ENCODE measurements at regions of chr11 and their contacts with region 1.

Region 1: DNA sequence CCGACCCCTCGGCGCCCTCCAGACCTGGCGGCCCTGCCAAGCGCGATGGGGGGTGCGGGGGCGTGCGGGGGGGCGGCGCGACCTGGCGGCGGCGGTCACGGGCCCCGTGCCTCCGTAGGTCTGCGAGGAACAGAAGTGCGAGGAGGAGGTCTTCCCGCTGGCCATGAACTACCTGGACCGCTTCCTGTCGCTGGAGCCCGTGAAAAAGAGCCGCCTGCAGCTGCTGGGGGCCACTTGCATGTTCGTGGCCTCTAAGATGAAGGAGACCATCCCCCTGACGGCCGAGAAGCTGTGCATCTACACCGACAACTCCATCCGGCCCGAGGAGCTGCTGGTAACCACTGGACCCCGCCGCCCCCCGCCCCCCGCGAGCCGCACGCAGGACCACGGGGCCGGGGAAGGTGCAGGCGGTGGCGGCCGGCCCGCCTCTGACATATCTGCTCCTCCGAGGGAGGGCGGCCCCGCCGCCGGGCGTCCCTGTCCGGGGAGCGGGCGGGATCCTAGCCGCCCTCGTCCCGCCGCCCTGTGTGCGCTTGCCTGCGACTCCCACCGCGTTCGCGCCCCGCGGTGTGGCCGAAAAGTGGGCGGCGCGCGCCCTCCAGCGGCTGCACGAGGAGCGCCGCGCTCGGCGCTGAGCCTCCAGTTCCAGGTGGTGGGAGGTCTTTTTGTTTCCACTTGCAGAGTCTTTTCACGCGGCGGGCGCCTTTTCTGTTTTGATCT is 2.1 kb downstream of the CCND1 start:
- DNase-seq: peak; percentile 72 to 89
- H3K4me3 ChIP-seq: peak overlapping the region; percentile 72 to 91
- H3K27ac ChIP-seq: peak overlapping the region; percentile 96
- H3K4me1 ChIP-seq: peaks cover 7 to 60% (median 43%) of the 10 kb centered on the region in 4 donors
- H3K27me3 ChIP-seq: no peaks in the 10 kb centered on the region
- CTCF ChIP-seq: peak; percentile 96 to 97

Region 2: GRCh38 chr11:68806921-68807844 is 835.9 kb before region 1 on chr11:
- intact Hi-C with region 1: loop called (anchors 10 kb)
- DNase-seq: no peak
- H3K4me3 ChIP-seq: no peak overlapping the region
- H3K27ac ChIP-seq: peak overlapping the region in 1 of 2 donors; percentile 18
- H3K4me1 ChIP-seq: peaks cover 0 to 30% (median 14%) of the 10 kb centered on the region in 4 donors
- H3K27me3 ChIP-seq: no peaks in the 10 kb centered on the region
- CTCF ChIP-seq: no peak

Region 3: DNA sequence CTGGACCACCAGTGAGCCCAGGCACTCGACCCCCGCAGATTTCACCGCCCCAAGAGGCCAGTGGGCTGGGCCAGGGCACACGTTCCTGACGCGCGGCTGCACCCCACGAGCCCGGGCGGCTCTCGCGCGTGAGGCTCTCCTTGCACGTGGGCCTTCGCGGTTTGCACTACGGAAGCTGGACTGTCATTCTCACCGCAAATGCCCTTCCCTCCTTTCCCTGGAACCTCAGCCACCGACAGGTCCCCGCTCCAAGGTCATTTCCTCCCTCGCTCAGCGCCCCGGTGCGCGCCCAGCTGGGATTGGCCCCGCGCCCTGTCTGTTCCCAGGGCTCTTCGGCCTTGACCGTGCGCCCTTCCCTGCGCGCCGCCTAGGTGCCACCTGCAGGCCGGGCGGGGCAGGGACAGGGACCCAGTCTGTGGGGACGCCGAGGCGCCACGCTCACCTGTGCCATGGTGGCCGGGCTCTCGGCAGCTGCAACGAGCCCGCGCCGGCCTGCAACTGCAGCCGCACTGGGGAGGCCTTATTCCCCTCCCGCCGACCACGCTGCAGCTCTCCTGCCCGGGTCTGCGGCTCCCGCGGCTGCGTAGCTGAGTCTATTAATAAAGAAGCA is 799.3 kb before region 1 on chr11:
- intact Hi-C with region 1: loop called (anchors 10 kb)
- DNase-seq: peak; percentile 41 to 74
- H3K4me3 ChIP-seq: peak overlapping the region; percentile 90 to 95
- H3K27ac ChIP-seq: no peak overlapping the region
- H3K4me1 ChIP-seq: peaks cover 0 to 51% (median 29%) of the 10 kb centered on the region in 4 donors
- H3K27me3 ChIP-seq: no peaks in the 10 kb centered on the region
- CTCF ChIP-seq: peak; percentile 29 to 44

Region 4: DNA sequence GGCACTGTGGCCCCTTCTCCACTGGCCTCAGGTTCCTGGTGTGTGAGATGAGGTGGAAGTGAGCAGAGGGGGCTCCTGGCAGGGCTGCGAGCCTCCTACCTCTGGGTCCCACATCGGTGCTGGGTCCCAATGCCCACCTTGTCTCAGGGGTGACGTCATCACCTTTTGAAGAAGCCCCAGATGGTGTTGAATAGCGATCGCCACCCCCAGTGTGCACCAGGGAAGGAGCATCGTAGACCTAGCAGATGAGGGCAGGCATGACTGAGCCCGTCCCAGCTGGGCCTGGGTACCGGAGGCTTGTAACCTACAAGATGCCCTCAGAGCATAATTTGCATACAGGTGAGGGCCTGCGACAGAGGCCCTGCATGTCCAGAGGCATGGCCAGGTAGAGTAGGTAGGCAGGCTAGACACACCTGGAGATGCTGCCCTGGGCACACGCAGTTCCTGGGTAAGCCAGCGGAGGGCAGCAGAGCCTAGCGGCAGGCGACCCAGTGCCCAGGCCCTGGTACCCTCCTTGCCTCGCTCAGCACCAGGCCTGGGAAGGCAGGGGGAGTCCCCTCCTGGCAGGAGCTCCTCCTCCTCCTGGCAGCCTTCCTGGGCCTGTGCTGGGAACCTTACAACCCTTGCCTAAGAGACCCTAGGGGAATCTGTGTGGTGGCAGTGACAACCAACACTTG is 541.8 kb before region 1 on chr11:
- intact Hi-C with region 1: loop called (anchors 1 kb)
- DNase-seq: peak; percentile 64 to 90
- H3K4me3 ChIP-seq: no peak overlapping the region
- H3K27ac ChIP-seq: no peak overlapping the region
- H3K4me1 ChIP-seq: peaks cover 0 to 15% (median 5%) of the 10 kb centered on the region in 4 donors
- H3K27me3 ChIP-seq: peaks cover 0 to 4% of the 10 kb centered on the region in 2 donors
- CTCF ChIP-seq: peak; percentile 99 to 100

Region 5: GRCh38 chr11:69186312-69187260 is 456.5 kb before region 1 on chr11:
- intact Hi-C with region 1: no loop called
- DNase-seq: no peak
- H3K4me3 ChIP-seq: no peak overlapping the region
- H3K27ac ChIP-seq: no peak overlapping the region
- H3K4me1 ChIP-seq: no peaks in the 10 kb centered on the region
- H3K27me3 ChIP-seq: peaks cover 0 to 16% of the 10 kb centered on the region in 2 donors
- CTCF ChIP-seq: no peak

Region 6: DNA sequence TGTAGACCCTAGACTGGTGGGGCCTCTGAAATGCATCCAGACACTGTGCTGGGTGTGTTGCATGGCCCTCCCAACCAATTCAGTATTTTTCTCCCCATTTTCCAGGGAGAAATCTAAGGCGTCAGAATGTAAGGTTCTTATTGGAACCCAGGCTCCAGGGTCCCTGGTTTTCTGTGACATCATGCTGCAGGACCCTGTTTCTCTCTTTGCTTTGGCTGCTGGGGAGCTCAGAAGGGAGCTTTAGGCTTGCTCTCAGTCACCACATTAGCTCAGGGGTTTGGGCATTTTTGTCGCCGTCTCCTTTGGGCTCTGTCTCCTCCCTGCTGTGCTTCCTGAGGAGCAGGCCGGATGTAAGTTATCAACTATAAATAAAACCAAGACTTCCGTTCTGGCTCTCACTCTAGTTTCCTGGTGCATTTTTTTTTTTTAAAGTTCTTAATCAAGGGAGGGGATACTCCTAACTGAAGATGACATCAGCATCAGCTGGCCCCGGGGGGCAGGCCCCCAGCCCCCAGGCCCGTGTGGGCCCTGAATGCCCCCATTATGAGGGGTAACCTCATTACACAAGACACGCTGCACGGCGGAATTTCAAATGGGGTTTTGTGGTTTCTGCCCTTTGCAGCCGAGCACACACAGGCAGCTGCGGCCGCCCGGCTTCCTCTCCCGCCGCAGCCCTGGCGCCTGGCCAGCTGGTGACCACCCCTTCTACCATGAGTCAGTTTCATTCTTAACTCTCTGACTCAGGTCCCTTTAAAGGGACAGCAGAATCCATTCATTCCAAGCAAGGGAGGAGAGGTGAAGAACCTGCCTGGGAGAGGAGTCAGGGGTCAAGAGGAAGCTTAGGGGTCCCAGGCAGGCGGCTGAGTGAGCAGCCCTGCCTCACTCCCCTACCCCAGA is 345.9 kb before region 1 on chr11:
- intact Hi-C with region 1: loop called (anchors 5 kb)
- DNase-seq: peak; percentile 95 to 96
- H3K4me3 ChIP-seq: peak overlapping the region; percentile 24 to 28
- H3K27ac ChIP-seq: peak overlapping the region; percentile 34 to 63
- H3K4me1 ChIP-seq: peaks cover 10 to 55% (median 46%) of the 10 kb centered on the region in 4 donors
- H3K27me3 ChIP-seq: no peaks in the 10 kb centered on the region
- CTCF ChIP-seq: no peak

Measured in tibial artery (tissue), 4 donors.